Left lung (tissue), 14 donors: ENCODE measurements at regions of chr10 and their contacts with region 1.

Region 1: GRCh38 chr10:72834183-72834825 is 59.2 kb upstream of the OIT3 start:
- DNase-seq: peak in 2 of 4 donors; percentile 49 to 79
- ATAC-seq: peak; percentile 77
- H3K4me3 ChIP-seq: no peak overlapping the region
- H3K27ac ChIP-seq: no peak overlapping the region
- H3K4me1 ChIP-seq: peaks cover 0 to 24% of the 10 kb centered on the region in 2 donors
- H3K27me3 ChIP-seq: no peaks in the 10 kb centered on the region
- CTCF ChIP-seq: peak; percentile 34 to 40

Region 2: DNA sequence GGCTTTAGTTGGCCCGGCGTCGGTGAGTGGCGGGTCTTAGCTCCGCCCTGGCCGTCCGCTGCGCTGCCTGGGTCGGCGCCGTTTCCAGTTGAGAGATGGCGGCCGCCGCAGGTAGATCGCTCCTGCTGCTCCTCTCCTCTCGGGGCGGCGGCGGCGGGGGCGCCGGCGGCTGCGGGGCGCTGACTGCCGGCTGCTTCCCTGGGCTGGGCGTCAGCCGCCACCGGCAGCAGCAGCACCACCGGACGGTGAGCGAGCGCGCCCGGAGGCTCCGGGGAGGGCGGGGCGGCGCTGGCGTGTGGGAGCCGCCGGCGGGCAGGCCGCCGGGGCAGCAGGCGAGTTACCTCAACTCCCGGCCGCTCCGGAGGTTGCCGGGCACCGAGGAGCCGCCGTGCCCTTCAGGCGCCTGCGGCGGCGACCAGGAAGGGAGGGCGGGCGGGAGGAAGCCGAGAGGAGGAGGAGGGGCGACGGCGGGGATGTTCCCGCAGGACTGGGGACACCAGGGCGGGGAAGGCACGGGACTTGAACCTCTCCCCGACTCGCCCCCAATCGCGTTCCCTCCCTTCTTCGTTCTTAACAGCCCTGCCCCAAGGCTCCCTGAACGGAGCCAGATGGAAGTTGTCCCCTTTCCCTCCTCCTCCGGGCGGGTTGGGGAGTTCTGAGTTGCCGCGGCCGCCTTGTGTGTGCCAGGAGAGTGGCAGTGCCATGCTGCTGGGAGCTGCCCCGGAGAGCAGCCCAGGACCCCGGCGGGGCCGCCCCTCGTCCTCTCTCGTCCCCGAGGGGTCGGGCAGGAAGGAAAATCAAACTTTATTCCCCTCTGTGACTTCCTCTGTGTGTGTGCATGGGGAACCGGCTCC is 142.0 kb before region 1 on chr10 and contains the start of gene MCU:
- intact Hi-C with region 1: loop called in 1 of 2 experiments (anchors 10 kb)
- DNase-seq: peak; percentile 85 to 98 (median 96)
- ATAC-seq: peak; percentile 87
- H3K4me3 ChIP-seq: peak within 1 kb of the TSS; percentile 62 to 88
- H3K27ac ChIP-seq: peak within 1 kb of the TSS; percentile 93
- H3K4me1 ChIP-seq: peaks cover 19 to 38% of the 10 kb centered on the region in 2 donors
- H3K27me3 ChIP-seq: no peaks in the 10 kb centered on the region
- CTCF ChIP-seq: no peak
- polyA plus RNA-seq, gene MCU: 29.4 to 47.4 (median 37.1) TPM